Transverse colon (tissue), 4 donors: ENCODE measurements at regions of chr13 and their contacts with region 1.

Region 1: DNA sequence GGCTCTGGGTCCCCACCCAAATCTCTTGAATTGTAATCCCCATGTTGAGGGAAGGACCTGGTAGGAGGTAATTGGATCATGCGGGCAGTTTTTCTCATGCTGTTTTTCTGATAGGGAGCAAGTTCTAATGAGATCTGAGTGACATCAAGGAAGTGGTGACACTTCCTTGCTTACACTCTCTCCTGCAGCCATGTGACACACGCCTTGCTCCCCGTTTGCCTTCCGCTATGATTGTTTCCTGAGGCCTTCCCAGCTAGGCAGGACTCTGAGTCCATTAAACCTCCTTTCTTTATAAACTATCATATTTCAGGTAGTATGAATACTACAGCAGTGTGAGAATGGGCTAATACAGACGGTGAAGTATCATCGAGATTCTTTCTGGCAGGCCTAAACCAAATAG is 1040.4 kb upstream of the MIR17HG start:
- DNase-seq: no peak
- H3K4me3 ChIP-seq: no peak overlapping the region
- H3K27ac ChIP-seq: no peak overlapping the region
- H3K4me1 ChIP-seq: no peaks in the 10 kb centered on the region
- H3K27me3 ChIP-seq: no peaks in the 10 kb centered on the region
- CTCF ChIP-seq: no peak
- EP300 ChIP-seq: no peak
- POLR2A ChIP-seq: no peak

Region 2: DNA sequence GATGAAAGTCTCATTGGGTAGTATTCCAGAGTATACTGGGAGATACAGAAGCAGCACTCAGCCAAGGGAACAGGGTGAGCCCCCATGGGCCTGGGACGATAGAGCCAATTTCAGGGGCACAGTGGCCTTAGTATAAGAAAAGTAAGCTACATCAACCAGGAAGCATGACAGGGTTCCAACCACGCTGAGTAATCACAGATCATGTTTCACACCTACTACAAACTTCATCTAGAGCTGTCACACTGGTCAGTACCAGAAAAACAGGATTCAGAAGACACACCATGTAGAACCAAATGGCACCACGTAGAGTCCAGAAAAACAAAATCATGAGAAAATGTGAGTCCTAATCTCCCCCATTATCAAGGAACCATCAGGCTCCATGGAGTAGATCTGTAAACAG is 252.0 kb before region 1 on chr13:
- in situ Hi-C with region 1: no loop called
- intact Hi-C with region 1: no loop called
- DNase-seq: no peak
- H3K4me3 ChIP-seq: no peak overlapping the region
- H3K27ac ChIP-seq: no peak overlapping the region
- H3K4me1 ChIP-seq: no peaks in the 10 kb centered on the region
- H3K27me3 ChIP-seq: no peaks in the 10 kb centered on the region
- CTCF ChIP-seq: no peak
- EP300 ChIP-seq: no peak
- POLR2A ChIP-seq: no peak

Region 3: DNA sequence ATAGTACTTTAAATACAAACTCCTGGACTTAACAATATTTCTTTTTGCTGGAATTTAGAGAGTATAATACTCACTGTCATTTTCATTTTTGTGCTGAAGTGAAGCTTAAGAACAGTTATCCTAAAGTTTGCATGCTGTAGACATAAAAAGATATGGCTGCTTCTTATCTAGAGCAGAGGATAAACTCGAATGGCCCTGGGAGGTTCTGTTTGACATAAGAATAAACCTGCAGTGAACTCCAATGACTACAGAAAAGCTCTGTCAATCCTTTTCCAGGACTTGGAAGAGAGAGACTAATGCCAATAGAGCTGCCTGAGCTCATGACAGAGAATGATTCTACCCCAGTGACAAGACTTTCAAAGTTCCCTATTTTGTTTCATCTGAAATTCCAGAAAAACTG is 22.5 kb after region 1 on chr13:
- in situ Hi-C with region 1: no loop called
- intact Hi-C with region 1: loop called (anchors 1 kb)
- DNase-seq: no peak
- H3K4me3 ChIP-seq: no peak overlapping the region
- H3K27ac ChIP-seq: no peak overlapping the region
- H3K4me1 ChIP-seq: no peaks in the 10 kb centered on the region
- H3K27me3 ChIP-seq: no peaks in the 10 kb centered on the region
- CTCF ChIP-seq: no peak
- EP300 ChIP-seq: no peak
- POLR2A ChIP-seq: no peak

Region 4: GRCh38 chr13:91001371-91001770 is 694.2 kb after region 1 on chr13:
- in situ Hi-C with region 1: no loop called
- intact Hi-C with region 1: no loop called
- DNase-seq: no peak
- H3K4me3 ChIP-seq: no peak overlapping the region
- H3K27ac ChIP-seq: no peak overlapping the region
- H3K4me1 ChIP-seq: no peaks in the 10 kb centered on the region
- H3K27me3 ChIP-seq: no peaks in the 10 kb centered on the region
- CTCF ChIP-seq: no peak
- EP300 ChIP-seq: no peak
- POLR2A ChIP-seq: no peak